PC-9 (cell line): ENCODE measurements at regions of chr2 and their contacts with region 1.

Region 1: GRCh38 chr2:101308432-101309210 is at the start of gene RNF149:
- DNase-seq: peak; percentile 69 to 94
- H3K4me3 ChIP-seq: peak within 1 kb of the TSS; percentile 80
- H3K27ac ChIP-seq: peak within 1 kb of the TSS; percentile 84
- H3K4me1 ChIP-seq: peaks cover 44% of the 10 kb centered on the region
- H3K27me3 ChIP-seq: no peaks in the 10 kb centered on the region
- CTCF ChIP-seq: no peak
- total RNA-seq, gene RNF149: 58.6 and 71.6 TPM in 2 replicates

Region 2: GRCh38 chr2:101328474-101329007 is 19.9 kb after region 1 on chr2:
- CTCF ChIA-PET with region 1: interaction called, 3 read pairs
- POLR2A ChIA-PET with region 1: interaction called, 3 read pairs
- intact Hi-C with region 1: loop called (anchors 2 kb)
- DNase-seq: peak in 1 of 2 experiments; percentile 94
- H3K4me3 ChIP-seq: peak overlapping the region; percentile 54
- H3K27ac ChIP-seq: peak overlapping the region; percentile 99
- H3K4me1 ChIP-seq: peaks cover 49% of the 10 kb centered on the region
- H3K27me3 ChIP-seq: no peaks in the 10 kb centered on the region
- CTCF ChIP-seq: no peak

Region 3: DNA sequence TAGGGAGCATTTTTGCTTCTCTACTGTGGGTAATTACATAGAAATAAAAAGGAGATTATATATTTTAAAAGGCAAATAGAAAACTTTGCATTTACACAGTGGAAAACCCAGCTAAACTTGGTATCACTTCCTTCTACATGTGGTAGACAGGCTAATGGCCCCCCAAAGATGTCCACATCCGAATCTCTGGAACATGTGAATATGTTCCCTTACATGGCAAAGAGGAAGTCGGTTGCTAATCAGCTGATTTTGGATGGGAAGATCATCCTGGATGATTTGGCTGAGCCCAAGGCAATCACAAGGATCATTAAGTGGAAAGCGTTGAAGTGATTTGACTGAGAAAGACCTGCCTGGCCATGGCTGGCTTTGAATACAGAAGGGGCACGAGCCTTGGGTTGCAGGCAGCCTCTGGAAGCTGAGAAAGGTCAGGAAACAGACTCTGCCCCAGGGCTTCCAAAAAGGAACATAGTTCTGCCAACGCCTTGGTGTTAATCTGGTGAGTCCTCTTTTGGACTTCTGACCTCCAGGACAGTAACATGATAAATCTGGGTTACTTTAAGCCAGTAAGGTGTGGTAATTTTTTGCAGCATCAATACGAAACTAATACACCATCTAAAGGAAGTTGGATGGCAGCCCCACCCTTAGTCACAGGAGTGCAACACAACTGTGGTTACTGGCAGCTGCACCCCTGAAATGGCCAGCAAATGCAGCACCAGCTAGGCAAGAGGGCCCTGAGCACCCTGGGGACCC is 52.7 kb after region 1 on chr2:
- CTCF ChIA-PET with region 1: no interaction called
- POLR2A ChIA-PET with region 1: no interaction called
- intact Hi-C with region 1: loop called (anchors 2 kb)
- DNase-seq: peak in 1 of 2 experiments; percentile 52
- H3K4me3 ChIP-seq: no peak overlapping the region
- H3K27ac ChIP-seq: peak overlapping the region; percentile 88
- H3K4me1 ChIP-seq: peaks cover 60% of the 10 kb centered on the region
- H3K27me3 ChIP-seq: no peaks in the 10 kb centered on the region
- CTCF ChIP-seq: no peak

Region 4: GRCh38 chr2:101387151-101387807 is 78.7 kb after region 1 on chr2 and contains the start of gene CREG2:
- CTCF ChIA-PET with region 1: no interaction called
- POLR2A ChIA-PET with region 1: no interaction called
- intact Hi-C with region 1: loop called (anchors 5 kb)
- DNase-seq: peak; percentile 47 to 75
- H3K4me3 ChIP-seq: peak within 1 kb of the TSS; percentile 84
- H3K27ac ChIP-seq: peak within 1 kb of the TSS; percentile 80
- H3K4me1 ChIP-seq: peaks cover 26% of the 10 kb centered on the region
- H3K27me3 ChIP-seq: no peaks in the 10 kb centered on the region
- CTCF ChIP-seq: peak; percentile 69
- total RNA-seq, gene CREG2: 9.0 and 12.3 TPM in 2 replicates

Region 5: DNA sequence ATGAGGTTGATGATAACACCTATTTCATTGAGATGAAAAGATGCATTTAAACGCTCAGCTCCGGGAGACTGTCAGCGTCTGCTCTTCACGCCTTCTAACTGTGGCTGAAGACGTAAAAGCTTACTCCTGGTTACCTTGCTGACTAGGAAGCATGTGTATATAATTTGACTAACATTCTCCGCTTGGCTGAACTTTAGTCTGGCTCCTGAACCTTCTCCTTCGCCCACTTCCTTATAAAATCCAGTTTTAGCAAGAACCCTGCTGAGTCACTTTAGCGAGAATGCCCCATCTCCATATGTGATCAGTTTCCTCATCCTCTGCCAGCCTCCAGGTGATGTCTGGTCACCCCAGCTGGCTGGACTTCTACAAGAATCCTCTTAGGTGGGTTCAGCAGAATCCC is 91.4 kb after region 1 on chr2:
- CTCF ChIA-PET with region 1: no interaction called
- POLR2A ChIA-PET with region 1: no interaction called
- intact Hi-C with region 1: no loop called
- DNase-seq: peak; percentile 39 to 84
- H3K4me3 ChIP-seq: no peak overlapping the region
- H3K27ac ChIP-seq: peak overlapping the region; percentile 9; the same call in 1 of the 2 replicates
- H3K4me1 ChIP-seq: peaks cover 38% of the 10 kb centered on the region
- H3K27me3 ChIP-seq: no peaks in the 10 kb centered on the region
- CTCF ChIP-seq: no peak

Region 6: GRCh38 chr2:101766871-101767739 is 458.5 kb after region 1 on chr2:
- CTCF ChIA-PET with region 1: no interaction called
- POLR2A ChIA-PET with region 1: no interaction called
- intact Hi-C with region 1: loop called (anchors 5 kb)
- DNase-seq: peak; percentile 60 to 89
- H3K4me3 ChIP-seq: no peak overlapping the region
- H3K27ac ChIP-seq: peak overlapping the region; percentile 73
- H3K4me1 ChIP-seq: peaks cover 73% of the 10 kb centered on the region
- H3K27me3 ChIP-seq: no peaks in the 10 kb centered on the region
- CTCF ChIP-seq: no peak